WTC11 (cell line): ENCODE measurements at regions of chr11 and their contacts with region 1.

Region 1: DNA sequence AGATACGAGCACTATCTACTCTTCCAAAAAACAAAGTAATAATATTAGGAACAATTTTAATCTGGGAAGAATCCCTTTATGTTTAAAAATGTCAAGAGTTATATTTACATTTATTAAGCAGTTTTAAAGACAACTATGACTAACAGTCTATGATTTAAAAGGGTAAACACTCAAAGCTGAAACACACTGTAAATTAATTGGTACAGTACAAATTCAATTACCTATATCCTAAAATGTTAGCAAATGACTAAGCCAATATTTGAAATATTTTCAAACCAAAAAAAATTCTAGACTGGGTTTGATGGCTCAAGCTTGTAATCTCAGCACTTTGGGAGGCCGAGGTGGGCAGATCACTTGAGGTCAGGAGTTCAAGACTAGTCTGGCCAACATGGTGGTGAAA is 36.0 kb upstream of the CHRNA10 start:
- DNase-seq: no peak
- ATAC-seq: no peak
- H3K4me3 Mint-ChIP-seq: no peak overlapping the region
- H3K27ac Mint-ChIP-seq: no peak overlapping the region; the same call in 1 of the 2 replicates
- H3K4me1 Mint-ChIP-seq: peaks cover 21% of the 10 kb centered on the region
- H3K27me3 Mint-ChIP-seq: no peaks in the 10 kb centered on the region; the same call in 1 of the 2 replicates
- CTCF ChIP-seq: no peak

Region 2: DNA sequence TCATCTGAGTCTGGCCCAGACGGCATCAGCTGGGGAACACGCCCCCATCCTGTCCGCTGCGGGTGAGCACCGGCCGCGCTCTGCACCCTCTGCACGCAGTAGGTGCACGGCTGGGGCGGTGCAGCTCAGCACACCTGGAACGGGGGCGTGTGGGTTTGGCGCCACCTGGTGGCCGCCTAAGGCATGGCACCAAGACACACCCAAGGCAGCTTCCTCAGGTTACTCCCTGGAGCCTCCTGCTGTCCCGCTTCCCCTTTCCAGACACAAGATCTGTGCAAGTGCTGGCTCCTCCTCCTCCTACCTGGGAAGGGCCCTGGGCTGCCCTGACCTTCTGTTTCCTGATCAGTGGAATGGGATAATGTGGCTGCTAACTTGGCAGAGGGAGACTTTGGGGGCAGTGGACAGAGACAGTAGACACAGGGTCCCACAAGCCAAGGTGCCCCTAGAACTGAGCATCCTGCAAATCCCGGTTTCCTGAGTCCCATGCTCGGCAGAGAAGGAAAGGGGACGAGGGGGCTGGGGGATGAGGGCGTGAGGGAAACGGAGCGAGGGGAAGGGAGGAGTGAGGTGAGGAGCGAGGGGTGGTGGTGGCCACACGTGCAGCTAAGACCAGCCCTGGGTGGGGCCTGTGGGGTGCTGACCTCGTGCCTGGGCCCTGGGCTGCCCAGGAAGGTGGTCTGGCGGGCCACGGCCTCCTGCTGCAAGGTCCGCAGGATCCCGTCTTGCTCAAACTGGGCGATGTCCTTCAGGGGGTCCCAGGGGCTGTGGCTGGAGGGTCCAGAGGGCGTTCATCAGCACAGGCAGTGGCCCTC is 615.2 kb before region 1 on chr11:
- CTCF ChIA-PET with region 1: no interaction called
- POLR2A ChIA-PET with region 1: no interaction called
- DNase-seq: peak; percentile 95
- ATAC-seq: peak; percentile 92
- H3K4me3 Mint-ChIP-seq: no peak overlapping the region
- H3K27ac Mint-ChIP-seq: peak overlapping the region; percentile 21; the same call in 1 of the 2 replicates
- H3K4me1 Mint-ChIP-seq: peaks cover 23% of the 10 kb centered on the region
- H3K27me3 Mint-ChIP-seq: peaks cover 7% of the 10 kb centered on the region
- CTCF ChIP-seq: peak; percentile 100

Region 3: DNA sequence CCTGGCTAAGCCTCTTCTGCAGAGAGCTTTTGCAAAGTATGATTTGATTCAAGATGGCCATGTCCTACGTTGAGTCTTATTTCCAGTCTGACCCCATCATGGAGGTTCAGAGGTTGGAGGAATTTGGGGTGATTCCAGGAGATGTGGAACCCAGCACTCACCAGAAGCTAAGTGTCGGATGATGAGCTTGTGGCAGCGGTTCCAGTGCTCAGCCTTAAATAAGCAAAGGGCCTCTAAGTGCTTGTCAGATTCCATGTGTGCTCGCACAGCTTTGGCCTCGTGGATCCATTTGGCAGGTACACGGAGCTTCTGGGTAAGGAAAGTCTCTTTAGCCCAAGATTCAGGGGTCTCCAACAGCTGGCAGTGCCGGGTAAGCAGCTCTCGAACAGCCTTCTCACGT is 24.1 kb before region 1 on chr11:
- CTCF ChIA-PET with region 1: no interaction called
- POLR2A ChIA-PET with region 1: interaction called, 10 read pairs
- DNase-seq: no peak
- ATAC-seq: no peak
- H3K4me3 Mint-ChIP-seq: no peak overlapping the region
- H3K27ac Mint-ChIP-seq: no peak overlapping the region
- H3K4me1 Mint-ChIP-seq: no peaks in the 10 kb centered on the region
- H3K27me3 Mint-ChIP-seq: no peaks in the 10 kb centered on the region
- CTCF ChIP-seq: no peak